K562 (cell line): ENCODE measurements at regions of chr7 and their contacts with region 1.

Region 1: DNA sequence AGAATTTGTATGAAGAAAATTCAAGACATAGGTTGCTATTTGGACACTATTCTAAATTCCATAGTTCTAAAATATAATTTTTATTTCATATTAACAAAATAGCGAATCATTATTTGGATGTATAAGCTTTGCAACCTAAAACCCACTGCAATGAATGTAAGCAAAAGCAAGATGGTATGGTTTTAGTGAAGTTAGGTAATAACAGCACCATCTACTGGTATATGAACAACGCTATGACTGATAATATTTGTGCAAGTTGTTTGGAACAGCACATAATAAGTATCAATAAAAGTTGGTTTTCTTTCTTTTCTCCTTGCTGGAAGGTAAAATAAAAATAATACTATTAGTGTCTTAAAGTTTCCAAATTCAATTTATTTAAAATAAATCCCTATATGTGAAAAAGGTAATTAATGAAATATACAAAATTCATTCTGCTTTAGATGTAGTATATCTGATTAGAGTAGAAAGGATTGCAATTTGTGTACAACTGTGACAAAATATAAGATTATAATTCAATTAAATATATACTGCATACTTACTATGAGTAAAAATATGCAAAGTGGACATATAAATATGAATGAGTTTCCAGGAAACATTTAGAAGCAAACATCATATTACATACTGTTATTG is 79.0 kb upstream of the LSM8 start:
- DNase-seq: peak in 2 of 4 experiments; percentile 12 to 13
- ATAC-seq: peak; percentile 73
- H3K4me3 ChIP-seq: no peak overlapping the region
- H3K27ac ChIP-seq: no peak overlapping the region
- H3K4me1 ChIP-seq: no peaks in the 10 kb centered on the region
- H3K27me3 ChIP-seq: no peaks in the 10 kb centered on the region
- CTCF ChIP-seq: peak; percentile 36 to 61 (median 37); a peak in 3 of 6 replicates
- EP300 ChIP-seq: no peak
- POLR2A ChIP-seq: no peak
- RAD21 ChIP-seq: peak; percentile 73 to 81

Region 2: DNA sequence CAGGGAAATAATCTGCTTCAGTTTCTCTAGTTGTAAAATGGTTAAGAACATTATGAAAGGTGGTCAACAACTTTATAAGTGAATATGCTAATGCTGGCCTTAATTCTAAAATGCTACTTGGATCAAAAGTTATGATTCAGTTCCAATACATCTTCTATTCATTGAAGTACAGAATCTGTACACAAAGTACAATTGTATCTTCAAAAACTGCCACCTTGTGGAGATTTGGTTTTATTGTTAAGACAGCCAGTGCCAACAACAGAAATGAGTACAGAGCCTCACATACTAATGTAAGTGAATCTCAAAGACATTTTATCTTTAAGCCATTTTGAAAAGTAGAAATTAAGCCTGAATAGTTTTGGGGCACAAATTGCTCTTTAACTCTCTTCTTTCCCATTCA is 431.1 kb before region 1 on chr7:
- CTCF ChIA-PET with region 1: no interaction called
- POLR2A ChIA-PET with region 1: no interaction called
- in situ Hi-C with region 1: no loop called
- intact Hi-C with region 1: loop called (anchors 10 kb)
- DNase-seq: peak in 1 of 4 experiments; percentile 16
- ATAC-seq: peak; percentile 68
- H3K4me3 ChIP-seq: no peak overlapping the region
- H3K27ac ChIP-seq: no peak overlapping the region
- H3K4me1 ChIP-seq: peaks cover 0 to 2% of the 10 kb centered on the region in 2 experiments; a peak in 2 of 5 replicates
- H3K27me3 ChIP-seq: peaks cover 0 to 7% of the 10 kb centered on the region in 2 experiments; a peak in 2 of 5 replicates
- CTCF ChIP-seq: peak in 2 of 3 experiments; percentile 14 to 20; a peak in 3 of 6 replicates
- EP300 ChIP-seq: no peak
- POLR2A ChIP-seq: no peak
- RAD21 ChIP-seq: peak; percentile 36 to 40; a peak in 2 of 4 replicates

Region 3: GRCh38 chr7:119123332-119123731 is 1018.4 kb after region 1 on chr7:
- CTCF ChIA-PET with region 1: no interaction called
- POLR2A ChIA-PET with region 1: no interaction called
- in situ Hi-C with region 1: no loop called
- intact Hi-C with region 1: no loop called
- DNase-seq: no peak
- ATAC-seq: no peak
- H3K4me3 ChIP-seq: no peak overlapping the region
- H3K27ac ChIP-seq: no peak overlapping the region
- H3K4me1 ChIP-seq: no peaks in the 10 kb centered on the region
- H3K27me3 ChIP-seq: no peaks in the 10 kb centered on the region
- CTCF ChIP-seq: no peak
- EP300 ChIP-seq: no peak
- POLR2A ChIP-seq: no peak
- RAD21 ChIP-seq: no peak